CD4-positive, alpha-beta T cell (primary cell): ENCODE measurements at regions of chr7 and their contacts with region 1.

Region 1: DNA sequence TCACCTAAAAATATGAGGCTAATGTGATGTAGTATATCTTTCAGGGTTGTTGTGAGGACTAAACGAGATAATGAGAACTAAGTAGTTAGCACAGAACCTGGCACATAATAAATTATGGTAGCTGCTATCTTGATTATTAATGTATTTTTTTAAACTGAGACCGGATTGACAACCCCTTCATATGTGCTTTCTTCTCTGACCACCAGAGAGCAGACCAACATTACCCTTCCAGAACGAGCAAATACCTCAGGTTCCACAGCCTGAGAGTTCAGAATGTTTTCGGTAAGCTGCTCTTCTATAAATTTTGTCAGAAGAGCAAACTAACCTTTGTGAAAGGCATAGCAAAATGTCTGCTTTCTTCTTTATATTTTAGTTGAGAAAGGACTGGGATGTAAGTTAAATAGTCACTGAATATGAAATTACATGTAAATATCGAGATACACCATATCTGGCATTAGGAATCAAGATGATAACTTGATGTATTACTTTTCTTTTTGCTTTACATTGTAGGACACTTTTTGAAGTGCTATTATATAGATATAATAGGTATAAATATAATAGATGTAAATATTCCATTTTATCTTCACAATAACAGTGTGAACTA is 13.6 kb upstream of the BPGM start:
- DNase-seq: peak in 11 of 14 experiments; percentile 7 to 82 (median 40)
- ATAC-seq: peak; percentile 97
- H3K4me3 ChIP-seq: no peak overlapping the region
- H3K4me3 Mint-ChIP-seq: no peak overlapping the region
- H3K27ac ChIP-seq: no peak overlapping the region
- H3K27ac Mint-ChIP-seq: no peak overlapping the region
- H3K4me1 ChIP-seq: peaks cover 6% of the 10 kb centered on the region
- H3K4me1 Mint-ChIP-seq: peaks cover 23% of the 10 kb centered on the region
- H3K27me3 ChIP-seq: peaks cover 3 to 5% of the 10 kb centered on the region in 2 experiments
- H3K27me3 Mint-ChIP-seq: peaks cover 11% of the 10 kb centered on the region
- CTCF ChIP-seq: peak; percentile 80

Region 2: DNA sequence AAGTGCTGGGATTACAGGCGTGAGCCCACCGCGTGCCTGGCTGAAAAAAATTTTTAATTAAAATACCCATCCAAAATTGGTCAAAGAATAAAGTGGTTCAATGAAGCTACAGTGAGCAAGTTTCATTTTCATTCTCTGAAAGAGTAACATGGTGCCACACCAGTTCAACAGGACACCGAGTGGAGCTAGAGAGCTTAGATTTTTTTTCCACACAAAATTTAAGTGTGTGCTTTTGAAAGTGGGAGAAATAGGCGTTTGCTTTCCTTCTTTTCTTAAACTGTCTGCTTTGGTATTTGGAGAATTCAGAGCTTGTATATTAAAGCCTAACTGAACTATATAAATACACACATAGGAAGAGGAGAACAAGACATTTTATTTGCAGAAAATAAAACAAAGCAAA is 57.0 kb after region 1 on chr7:
- CTCF ChIA-PET with region 1: interaction called, 11 read pairs
- POLR2A ChIA-PET with region 1: no interaction called
- intact Hi-C with region 1: no loop called
- DNase-seq: no peak
- ATAC-seq: no peak
- H3K4me3 ChIP-seq: no peak overlapping the region
- H3K4me3 Mint-ChIP-seq: no peak overlapping the region
- H3K27ac ChIP-seq: no peak overlapping the region
- H3K27ac Mint-ChIP-seq: no peak overlapping the region
- H3K4me1 ChIP-seq: peaks cover 3% of the 10 kb centered on the region
- H3K4me1 Mint-ChIP-seq: peaks cover 4% of the 10 kb centered on the region
- H3K27me3 ChIP-seq: no peaks in the 10 kb centered on the region
- H3K27me3 Mint-ChIP-seq: no peaks in the 10 kb centered on the region
- CTCF ChIP-seq: no peak

Region 3: GRCh38 chr7:134750083-134751062 is 117.3 kb after region 1 on chr7:
- CTCF ChIA-PET with region 1: interaction called, 20 read pairs
- POLR2A ChIA-PET with region 1: no interaction called
- intact Hi-C with region 1: loop called (anchors 1 kb)
- DNase-seq: peak; percentile 49 to 86 (median 62)
- ATAC-seq: peak; percentile 82
- H3K4me3 ChIP-seq: no peak overlapping the region
- H3K4me3 Mint-ChIP-seq: no peak overlapping the region
- H3K27ac ChIP-seq: no peak overlapping the region
- H3K27ac Mint-ChIP-seq: no peak overlapping the region
- H3K4me1 ChIP-seq: no peaks in the 10 kb centered on the region
- H3K4me1 Mint-ChIP-seq: no peaks in the 10 kb centered on the region
- H3K27me3 ChIP-seq: no peaks in the 10 kb centered on the region
- H3K27me3 Mint-ChIP-seq: no peaks in the 10 kb centered on the region
- CTCF ChIP-seq: peak; percentile 85

Region 4: DNA sequence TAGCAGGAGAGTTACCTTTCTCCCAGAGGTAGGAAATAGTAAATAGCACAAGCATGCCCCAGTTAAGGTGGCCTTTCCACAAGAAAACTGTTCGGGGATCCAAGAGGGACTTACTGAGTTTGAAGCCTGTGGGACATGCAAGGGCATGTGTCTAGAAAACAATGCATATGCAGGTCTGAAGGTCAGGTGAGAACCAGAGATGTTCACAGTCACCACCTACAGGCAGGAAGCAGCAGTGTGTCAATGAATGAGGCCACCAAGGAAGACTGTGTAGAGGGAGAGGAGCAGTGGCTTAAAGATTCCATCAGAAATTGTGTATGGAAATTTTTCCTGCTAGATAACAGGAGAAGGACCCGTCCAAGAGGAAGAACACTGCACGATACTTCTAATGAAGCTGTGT is 212.4 kb after region 1 on chr7:
- CTCF ChIA-PET with region 1: no interaction called
- POLR2A ChIA-PET with region 1: no interaction called
- intact Hi-C with region 1: loop called in 1 of 2 experiments (anchors 5 kb)
- DNase-seq: peak in 2 of 14 experiments; percentile 8 to 11
- ATAC-seq: no peak
- H3K4me3 ChIP-seq: no peak overlapping the region
- H3K4me3 Mint-ChIP-seq: no peak overlapping the region
- H3K27ac ChIP-seq: no peak overlapping the region
- H3K27ac Mint-ChIP-seq: no peak overlapping the region
- H3K4me1 ChIP-seq: no peaks in the 10 kb centered on the region
- H3K4me1 Mint-ChIP-seq: no peaks in the 10 kb centered on the region
- H3K27me3 ChIP-seq: no peaks in the 10 kb centered on the region
- H3K27me3 Mint-ChIP-seq: no peaks in the 10 kb centered on the region
- CTCF ChIP-seq: peak; percentile 17

Region 5: DNA sequence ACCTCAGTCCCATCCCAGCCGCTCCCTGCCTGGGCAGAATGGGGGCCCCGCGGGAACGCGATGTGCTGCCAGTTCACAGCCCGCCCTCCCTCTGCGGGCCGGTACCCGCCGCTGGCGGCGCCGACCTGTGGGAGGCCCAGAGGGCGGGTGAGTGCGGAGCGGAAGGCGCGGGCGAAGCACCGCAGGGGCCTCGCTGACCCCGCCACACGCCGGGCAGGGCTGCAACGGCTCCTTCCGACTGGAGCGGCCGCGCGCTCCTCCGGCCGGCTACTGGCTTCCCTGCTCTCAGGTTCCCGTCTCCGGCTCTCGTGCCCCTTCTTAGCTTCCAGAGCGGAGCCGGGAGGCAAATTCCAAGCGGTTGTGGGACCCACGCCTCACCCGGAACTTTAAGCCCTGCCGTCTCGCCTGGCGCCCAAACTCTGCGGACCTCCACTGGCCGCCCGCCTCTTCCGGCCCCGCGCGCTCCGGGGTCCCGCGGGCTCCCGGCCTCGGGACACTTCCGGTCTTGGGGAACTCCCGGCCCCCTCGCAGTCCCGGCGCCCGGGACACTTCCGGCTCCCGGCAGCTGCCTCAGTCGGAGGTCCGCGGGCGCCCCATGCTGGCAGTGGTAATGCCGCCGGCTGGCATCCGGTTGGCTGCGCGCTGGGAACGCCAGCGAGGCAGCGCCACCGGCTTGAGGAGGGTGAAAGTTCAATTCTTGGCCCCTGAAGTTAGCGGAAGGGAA is 537.4 kb after region 1 on chr7 and contains the start of gene CYREN:
- CTCF ChIA-PET with region 1: interaction called, 8 read pairs
- POLR2A ChIA-PET with region 1: interaction called, 4 read pairs
- intact Hi-C with region 1: loop called in 1 of 2 experiments (anchors 5 kb)
- DNase-seq: peak; percentile 75 to 95 (median 87)
- ATAC-seq: peak; percentile 77
- H3K4me3 ChIP-seq: peak within 1 kb of the TSS; percentile 82
- H3K4me3 Mint-ChIP-seq: peak within 1 kb of the TSS; percentile 91
- H3K27ac ChIP-seq: peak within 1 kb of the TSS; percentile 94
- H3K27ac Mint-ChIP-seq: peak within 1 kb of the TSS; percentile 94
- H3K4me1 ChIP-seq: peaks cover 47% of the 10 kb centered on the region
- H3K4me1 Mint-ChIP-seq: peaks cover 48% of the 10 kb centered on the region
- H3K27me3 ChIP-seq: no peaks in the 10 kb centered on the region
- H3K27me3 Mint-ChIP-seq: no peaks in the 10 kb centered on the region
- CTCF ChIP-seq: peak; percentile 76
- total RNA-seq, gene CYREN: 14.0 to 15.8 TPM